ENCODE measurements at regions of chr14 and their contacts with region 1.

Region 1: GRCh38 chr14:75660630-75661494 is at the starts of genes ERG28 and TTLL5:
- DNase-seq: peak; percentile 98
- ATAC-seq: peak; percentile 94
- H3K4me3 ChIP-seq: peak within 1 kb of the TSS; percentile 73 to 95 (median 85)
- H3K4me3 Mint-ChIP-seq: peak within 1 kb of the TSS; percentile 95
- H3K27ac ChIP-seq: peak within 1 kb of the TSS; percentile 80 to 96
- H3K27ac Mint-ChIP-seq: peak within 1 kb of the TSS; percentile 96
- H3K4me1 ChIP-seq: peaks cover 14 to 15% of the 10 kb centered on the region in 2 donors
- H3K4me1 Mint-ChIP-seq: peaks cover 27% of the 10 kb centered on the region
- H3K27me3 ChIP-seq: no peaks in the 10 kb centered on the region
- H3K27me3 Mint-ChIP-seq: no peaks in the 10 kb centered on the region
- CTCF ChIP-seq: no peak
- total RNA-seq, gene ERG28: 11.7 and 13.7 TPM in 2 replicates
- total RNA-seq, gene TTLL5: 47.0 and 50.9 TPM in 2 replicates

Region 2: DNA sequence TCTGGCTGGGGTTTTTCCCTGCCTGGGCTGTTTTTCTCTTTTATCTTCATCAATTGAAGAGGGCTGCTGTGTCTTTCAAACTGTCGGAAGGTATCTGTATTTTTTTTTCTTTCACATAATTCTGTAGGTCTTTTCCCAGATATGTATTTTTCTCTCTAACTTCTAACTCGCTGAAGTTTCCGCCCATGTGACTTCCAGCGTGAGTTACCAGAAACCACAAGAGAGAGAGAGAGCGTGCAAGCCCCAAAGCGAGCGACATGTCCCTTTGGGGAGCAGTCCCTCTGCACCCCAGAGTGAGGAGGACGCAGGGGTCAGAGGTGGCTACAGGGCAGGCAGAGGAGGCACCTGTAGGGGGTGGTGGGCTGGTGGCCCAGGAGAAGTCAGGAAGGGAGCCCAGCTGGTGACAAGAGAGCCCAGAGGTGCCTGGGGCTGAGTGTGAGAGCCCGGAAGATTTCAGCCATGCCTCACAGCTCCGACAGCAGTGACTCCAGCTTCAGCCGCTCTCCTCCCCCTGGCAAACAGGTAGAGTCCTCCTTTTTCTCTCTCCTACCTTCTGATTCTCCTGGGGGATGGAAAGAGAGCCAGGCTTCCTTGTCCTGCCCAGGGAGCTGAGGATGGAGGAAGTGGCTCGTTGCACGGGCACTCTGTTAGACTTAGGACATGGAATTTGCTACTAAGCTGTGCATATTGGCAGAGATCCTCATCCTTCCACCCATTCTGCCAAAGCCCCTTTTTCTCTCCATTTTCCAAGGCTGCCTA is 138.5 kb before region 1 on chr14 and contains the start of gene BATF:
- CTCF ChIA-PET with region 1: interaction called, 3 read pairs
- POLR2A ChIA-PET with region 1: no interaction called
- intact Hi-C with region 1: loop called (anchors 5 kb)
- DNase-seq: peak; percentile 83
- ATAC-seq: peak; percentile 71
- H3K4me3 ChIP-seq: peak within 1 kb of the TSS; percentile 53 to 80 (median 78)
- H3K4me3 Mint-ChIP-seq: peak within 1 kb of the TSS; percentile 99
- H3K27ac ChIP-seq: peak within 1 kb of the TSS; percentile 68 to 78
- H3K27ac Mint-ChIP-seq: peak within 1 kb of the TSS; percentile 98
- H3K4me1 ChIP-seq: peaks cover 35 to 51% of the 10 kb centered on the region in 2 donors
- H3K4me1 Mint-ChIP-seq: peaks cover 69% of the 10 kb centered on the region
- H3K27me3 ChIP-seq: no peaks in the 10 kb centered on the region
- H3K27me3 Mint-ChIP-seq: no peaks in the 10 kb centered on the region
- CTCF ChIP-seq: no peak
- total RNA-seq, gene BATF: 13.9 and 16.4 TPM in 2 replicates

Region 3: DNA sequence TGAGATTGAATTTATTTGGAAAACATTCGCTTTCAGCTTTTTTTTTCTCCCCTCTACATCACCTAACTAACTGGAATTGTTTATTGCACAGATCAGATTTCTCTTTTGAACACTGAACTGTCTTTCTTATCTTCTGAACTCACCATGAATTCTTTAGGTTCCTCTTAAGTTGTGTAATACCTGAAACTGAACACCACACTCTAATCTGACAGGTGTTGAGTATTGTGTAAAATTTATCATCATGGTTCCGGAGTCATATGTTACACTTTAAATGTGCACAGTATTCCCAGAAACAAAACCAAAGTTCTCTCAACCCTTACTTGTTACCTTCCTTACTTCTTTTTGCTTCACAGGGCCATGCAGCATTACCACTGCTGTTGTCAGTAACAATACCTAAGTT is 254.2 kb after region 1 on chr14:
- CTCF ChIA-PET with region 1: no interaction called
- POLR2A ChIA-PET with region 1: no interaction called
- intact Hi-C with region 1: no loop called
- DNase-seq: no peak
- ATAC-seq: no peak
- H3K4me3 ChIP-seq: no peak overlapping the region
- H3K4me3 Mint-ChIP-seq: no peak overlapping the region
- H3K27ac ChIP-seq: no peak overlapping the region
- H3K27ac Mint-ChIP-seq: no peak overlapping the region
- H3K4me1 ChIP-seq: peaks cover 0 to 4% of the 10 kb centered on the region in 2 donors
- H3K4me1 Mint-ChIP-seq: peaks cover 8% of the 10 kb centered on the region
- H3K27me3 ChIP-seq: no peaks in the 10 kb centered on the region
- H3K27me3 Mint-ChIP-seq: no peaks in the 10 kb centered on the region
- CTCF ChIP-seq: no peak